T-cell (primary cell): ENCODE measurements at regions of chr7 and their contacts with region 1.

Region 1: DNA sequence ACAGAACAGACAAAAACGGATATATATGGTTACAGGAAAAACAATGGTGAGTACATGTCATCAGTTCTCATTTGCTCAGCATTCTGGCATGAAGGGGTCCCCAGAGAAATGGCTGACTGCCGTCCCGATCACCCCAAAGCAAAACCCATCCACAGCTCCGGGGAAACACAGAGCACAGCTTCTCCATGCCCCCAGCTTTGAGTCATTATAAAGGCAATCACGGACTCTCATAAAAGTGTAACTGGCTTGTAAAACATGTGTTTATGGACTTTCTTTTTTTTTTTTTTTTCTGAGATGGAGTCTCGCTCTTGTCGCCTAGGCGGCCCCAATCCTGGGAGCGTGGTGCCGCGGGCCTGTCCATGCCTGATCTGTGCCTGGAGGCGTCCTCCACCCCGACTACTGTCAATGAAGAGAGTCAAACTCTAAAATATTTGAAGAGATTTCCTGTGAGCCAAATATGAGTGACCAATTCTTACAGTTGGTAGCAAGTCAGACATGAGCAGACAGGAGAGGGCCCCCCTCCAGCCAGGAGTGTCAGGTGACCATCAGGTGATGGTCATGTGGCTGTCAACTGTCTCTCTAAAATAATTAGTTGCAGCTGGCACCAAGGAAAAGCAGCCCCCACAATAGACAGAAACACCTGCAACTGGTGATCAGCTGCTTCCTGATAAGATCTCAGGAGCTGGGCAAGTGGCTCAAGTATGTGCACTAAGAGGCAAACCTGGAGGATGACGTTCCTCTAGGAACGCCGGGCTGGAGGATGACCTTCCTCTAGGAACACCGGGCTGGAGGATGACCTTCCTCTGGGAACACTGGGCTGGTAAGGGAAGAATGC is 21.7 kb upstream of the NOM1 start:
- DNase-seq: no peak
- ATAC-seq: no peak
- H3K4me3 ChIP-seq: no peak overlapping the region
- H3K4me3 Mint-ChIP-seq: no peak overlapping the region
- H3K27ac ChIP-seq: no peak overlapping the region
- H3K27ac Mint-ChIP-seq: no peak overlapping the region
- H3K4me1 ChIP-seq: peaks cover 0 to 18% of the 10 kb centered on the region in 2 experiments
- H3K4me1 Mint-ChIP-seq: peaks cover 25 to 37% (median 33%) of the 10 kb centered on the region in 3 donors
- H3K27me3 ChIP-seq: peaks cover under 1 to 12% of the 10 kb centered on the region in 2 experiments
- H3K27me3 Mint-ChIP-seq: peaks cover 3 to 9% of the 10 kb centered on the region in 2 donors

Region 2: GRCh38 chr7:156881679-156882078 is 46.1 kb before region 1 on chr7:
- CTCF ChIA-PET with region 1: no interaction called
- POLR2A ChIA-PET with region 1: interaction called in 1 of 2 experiments, 15 read pairs
- DNase-seq: no peak
- ATAC-seq: no peak
- H3K4me3 ChIP-seq: no peak overlapping the region
- H3K4me3 Mint-ChIP-seq: no peak overlapping the region
- H3K27ac ChIP-seq: no peak overlapping the region
- H3K27ac Mint-ChIP-seq: no peak overlapping the region
- H3K4me1 ChIP-seq: no peaks in the 10 kb centered on the region
- H3K4me1 Mint-ChIP-seq: peaks cover 66 to 71% (median 70%) of the 10 kb centered on the region in 3 donors
- H3K27me3 ChIP-seq: no peaks in the 10 kb centered on the region
- H3K27me3 Mint-ChIP-seq: no peaks in the 10 kb centered on the region

Region 3: GRCh38 chr7:156940421-156941122 is 12.8 kb after region 1 on chr7:
- CTCF ChIA-PET with region 1: no interaction called
- POLR2A ChIA-PET with region 1: no interaction called
- DNase-seq: no peak
- ATAC-seq: no peak
- H3K4me3 ChIP-seq: no peak overlapping the region
- H3K4me3 Mint-ChIP-seq: no peak overlapping the region
- H3K27ac ChIP-seq: no peak overlapping the region
- H3K27ac Mint-ChIP-seq: no peak overlapping the region
- H3K4me1 ChIP-seq: peaks cover 0 to 6% of the 10 kb centered on the region in 2 experiments
- H3K4me1 Mint-ChIP-seq: peaks cover 1 to 5% (median 2%) of the 10 kb centered on the region in 3 donors
- H3K27me3 ChIP-seq: peaks cover 0 to 55% of the 10 kb centered on the region in 2 experiments
- H3K27me3 Mint-ChIP-seq: peaks cover 29 to 36% of the 10 kb centered on the region in 2 donors